Activated CD8-positive, alpha-beta T cell treated with anti-CD3 and anti-CD28 coated beads, Interleukin-2, amount 10 ng/mL, durations not matched to agents 7 days and 5 days (primary cell): ENCODE measurements at regions of chr4 and their contacts with region 1.

Region 1: DNA sequence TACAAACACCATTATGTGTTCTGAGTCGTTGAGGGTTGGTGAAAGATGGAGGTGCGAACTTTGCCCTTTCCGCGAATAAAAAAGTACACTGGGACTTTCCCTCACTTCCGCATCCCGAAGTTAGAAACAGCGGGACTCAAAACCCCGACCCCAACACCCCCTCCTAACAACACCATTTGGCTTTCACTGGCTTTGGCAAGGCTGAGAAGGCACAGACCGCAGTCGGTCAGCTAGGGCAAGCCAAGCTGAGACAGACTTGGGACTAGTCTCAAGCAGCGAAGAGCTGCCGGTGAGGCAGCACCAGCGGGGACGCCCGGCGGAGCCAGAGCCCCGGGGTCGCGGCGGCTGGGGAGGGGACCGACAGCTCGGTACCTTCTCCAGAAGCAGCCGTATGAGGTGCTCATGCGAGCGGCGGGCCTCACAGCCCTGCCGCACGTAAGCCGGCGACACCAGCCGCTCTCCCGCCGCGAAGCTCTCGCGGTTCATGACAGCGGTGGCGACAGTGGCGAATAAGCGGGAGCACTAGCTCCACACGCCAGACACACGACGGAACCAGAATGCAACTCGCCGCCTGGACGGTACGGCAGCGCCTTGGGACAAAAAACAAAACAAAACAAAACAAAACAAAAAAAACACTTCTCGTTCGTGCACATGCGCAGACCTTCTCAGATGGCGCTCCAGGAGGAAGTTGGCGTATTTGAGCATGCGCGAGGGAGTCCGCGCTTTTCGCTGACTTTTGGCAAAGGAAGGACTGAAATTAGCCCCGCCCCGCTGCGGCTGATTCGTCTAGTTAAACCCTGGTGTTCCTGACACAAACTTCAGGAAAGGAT is at the start of gene SEPSECS:
- DNase-seq: peak; percentile 97
- ATAC-seq: peak; percentile 89
- H3K4me3 Mint-ChIP-seq: peak within 1 kb of the TSS; percentile 89
- H3K27ac Mint-ChIP-seq: peak within 1 kb of the TSS; percentile 95
- H3K4me1 Mint-ChIP-seq: peaks cover 33% of the 10 kb centered on the region
- H3K27me3 Mint-ChIP-seq: no peaks in the 10 kb centered on the region
- total RNA-seq, gene SEPSECS: 10.8 to 12.5 TPM

Region 2: GRCh38 chr4:25144870-25145481 is 15.1 kb before region 1 on chr4:
- CTCF ChIA-PET with region 1: interaction called, 12 read pairs
- POLR2A ChIA-PET with region 1: interaction called, 5 read pairs
- DNase-seq: no peak
- ATAC-seq: no peak
- H3K4me3 Mint-ChIP-seq: no peak overlapping the region
- H3K27ac Mint-ChIP-seq: no peak overlapping the region
- H3K4me1 Mint-ChIP-seq: no peaks in the 10 kb centered on the region
- H3K27me3 Mint-ChIP-seq: no peaks in the 10 kb centered on the region

Region 3: GRCh38 chr4:25180524-25181131 is 20.5 kb after region 1 on chr4:
- CTCF ChIA-PET with region 1: interaction called, 20 read pairs
- POLR2A ChIA-PET with region 1: interaction called, 4 read pairs
- DNase-seq: peak; percentile 57
- ATAC-seq: peak; percentile 79
- H3K4me3 Mint-ChIP-seq: no peak overlapping the region
- H3K27ac Mint-ChIP-seq: no peak overlapping the region
- H3K4me1 Mint-ChIP-seq: peaks cover 14% of the 10 kb centered on the region
- H3K27me3 Mint-ChIP-seq: no peaks in the 10 kb centered on the region

Region 4: DNA sequence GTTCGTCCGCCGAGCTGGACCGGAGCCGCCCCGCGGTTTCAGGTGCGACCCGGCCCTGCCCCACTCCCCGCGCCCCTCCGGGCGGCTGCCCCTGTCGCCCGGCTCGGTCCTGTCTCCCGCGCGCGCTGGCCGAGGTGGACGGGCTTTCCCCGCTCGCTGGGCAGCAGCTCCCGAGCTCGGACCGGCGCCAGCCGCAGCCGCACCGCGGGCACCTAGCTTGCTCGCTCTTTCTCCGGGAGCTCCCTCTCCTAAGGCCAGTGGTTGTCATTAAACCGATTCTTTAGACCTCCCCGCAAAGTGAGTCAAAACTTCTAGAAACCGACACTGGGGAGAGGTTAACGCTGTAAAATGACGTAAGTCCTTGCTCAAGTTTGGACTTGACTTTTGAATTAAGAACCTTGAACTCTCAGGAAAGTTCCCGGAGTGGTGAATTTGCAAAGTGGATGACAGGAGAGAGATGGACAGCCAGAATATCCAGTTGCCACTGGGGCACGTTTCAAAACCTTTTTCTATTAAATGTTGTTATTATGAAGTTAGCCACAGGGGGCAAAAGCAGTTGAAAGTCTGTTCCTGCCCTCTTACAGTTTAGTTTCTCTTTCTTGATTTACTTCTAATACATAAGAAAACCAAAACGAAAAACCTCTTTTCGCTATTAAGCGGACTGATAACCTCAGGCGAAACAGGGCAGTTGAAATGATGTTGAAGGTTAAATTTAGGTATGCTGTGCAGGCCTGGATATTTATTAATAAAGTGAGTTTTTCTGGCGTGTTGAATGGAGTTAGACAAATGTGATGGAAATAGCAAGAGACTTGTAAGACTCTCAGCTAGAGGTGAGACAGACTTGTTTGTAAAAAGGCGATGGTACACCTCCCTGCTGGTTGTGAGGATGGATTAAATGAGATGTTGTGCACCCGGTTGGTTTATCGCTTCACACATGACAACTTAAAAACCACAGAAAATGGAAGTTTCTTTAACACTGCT is 74.6 kb after region 1 on chr4:
- CTCF ChIA-PET with region 1: interaction called, 7 read pairs
- POLR2A ChIA-PET with region 1: interaction called, 59 read pairs
- DNase-seq: peak; percentile 60
- ATAC-seq: peak; percentile 45
- H3K4me3 Mint-ChIP-seq: peak overlapping the region; percentile 86
- H3K27ac Mint-ChIP-seq: peak overlapping the region; percentile 93
- H3K4me1 Mint-ChIP-seq: peaks cover 48% of the 10 kb centered on the region
- H3K27me3 Mint-ChIP-seq: no peaks in the 10 kb centered on the region

Region 5: GRCh38 chr4:25376754-25377571 is 216.9 kb after region 1 on chr4 and contains the start of gene ANAPC4:
- CTCF ChIA-PET with region 1: no interaction called
- POLR2A ChIA-PET with region 1: interaction called, 10 read pairs
- DNase-seq: peak; percentile 99
- ATAC-seq: peak; percentile 96
- H3K4me3 Mint-ChIP-seq: no peak within 1 kb of the TSS
- H3K27ac Mint-ChIP-seq: peak within 1 kb of the TSS; percentile 91
- H3K4me1 Mint-ChIP-seq: peaks cover 15% of the 10 kb centered on the region
- H3K27me3 Mint-ChIP-seq: no peaks in the 10 kb centered on the region
- total RNA-seq, gene ANAPC4: 45.4 to 48.6 TPM